ENCODE measurements at regions of chr5 and their contacts with region 1.

Region 1: DNA sequence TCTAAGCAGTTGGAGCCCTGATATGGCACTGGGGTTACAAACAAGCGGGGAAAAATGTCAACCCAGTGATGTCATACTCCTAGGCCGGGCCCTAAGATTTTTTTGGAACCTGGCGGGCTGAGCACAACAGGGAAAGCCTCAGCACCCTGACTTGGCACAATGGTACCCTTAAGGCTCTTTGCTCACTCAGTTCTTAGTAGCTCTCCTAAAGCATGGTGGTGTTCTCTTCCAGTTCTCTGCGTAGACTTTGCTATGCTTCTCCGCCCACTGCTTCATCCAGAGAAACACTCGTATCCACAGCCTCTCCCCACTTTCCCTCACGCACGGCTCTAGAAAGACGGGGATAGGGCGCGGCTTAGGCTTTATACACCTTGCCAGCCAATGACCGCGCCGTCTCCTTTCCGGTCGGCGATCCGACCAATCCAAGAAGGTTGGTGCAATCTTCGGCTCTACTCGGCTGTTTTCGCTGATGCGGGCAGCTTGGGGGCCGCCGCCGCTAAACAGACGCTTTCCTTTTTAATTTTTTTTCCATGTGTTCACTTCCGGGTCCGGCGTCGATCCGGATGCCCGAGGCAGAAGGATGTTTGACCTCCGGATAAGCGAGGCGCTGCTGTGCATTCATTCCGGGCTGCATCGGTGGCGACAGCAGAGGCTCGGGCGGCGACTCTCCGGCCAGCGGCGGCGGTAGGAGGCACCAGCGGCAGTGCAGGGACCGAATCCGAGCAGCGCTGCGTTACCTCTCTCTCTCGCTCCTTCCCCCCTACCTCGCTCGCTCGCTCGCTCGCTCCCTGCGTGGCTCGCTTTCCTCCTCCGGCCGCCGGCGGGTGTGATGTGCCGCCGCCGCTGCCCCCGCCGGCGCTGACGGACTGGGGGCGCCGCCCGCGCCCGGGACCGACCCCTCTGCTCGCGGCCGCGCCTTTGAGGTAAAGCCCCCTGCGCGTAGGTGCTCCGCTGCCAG is at the start of gene CSNK1G3:
- DNase-seq: peak; percentile 100
- H3K27ac ChIP-seq: peak within 1 kb of the TSS; percentile 94
- CTCF ChIP-seq: no peak

Region 2: DNA sequence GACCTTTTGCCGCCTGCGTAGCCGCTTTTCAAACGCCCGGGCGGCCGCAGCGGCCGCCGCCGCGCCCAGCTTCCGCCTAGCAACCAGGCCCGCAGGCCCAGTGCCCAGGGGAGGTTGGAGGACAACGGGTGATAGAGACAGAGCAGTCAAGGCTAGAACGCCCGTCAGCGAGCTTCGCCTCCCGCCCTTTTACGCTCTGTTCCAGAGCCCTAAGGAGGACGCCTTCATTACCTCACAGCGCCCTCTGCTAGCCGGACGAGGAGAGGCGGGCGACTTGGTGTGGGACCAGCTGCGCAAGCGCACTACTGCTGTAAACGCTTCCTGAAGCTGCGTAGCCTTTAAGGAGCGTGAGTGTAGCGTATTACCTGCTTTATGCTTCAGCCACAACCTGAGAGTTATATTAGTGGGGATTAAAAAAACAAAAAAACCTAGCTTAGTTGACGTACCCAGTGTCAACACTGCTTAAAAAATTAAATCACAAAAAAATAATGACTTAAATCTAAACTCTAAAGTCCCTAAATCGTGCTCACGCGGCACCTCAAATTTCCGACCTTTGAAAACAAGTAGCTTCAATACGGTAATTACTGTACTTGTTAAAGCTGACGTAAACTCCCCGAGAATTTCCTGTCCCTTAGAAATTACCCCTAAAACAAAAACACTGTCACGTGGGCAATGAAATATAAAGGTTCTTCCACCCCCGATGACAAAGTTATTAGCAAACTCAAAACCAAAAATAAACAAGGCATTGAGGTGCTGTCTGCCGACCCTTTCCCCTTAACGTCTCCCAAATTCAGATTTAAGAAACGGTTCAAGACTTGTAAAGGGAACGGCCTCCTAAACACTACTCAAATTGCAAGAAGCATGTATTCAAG is 88.4 kb before region 1 on chr5 and contains the start of gene CEP120:
- CTCF ChIA-PET with region 1: interaction called, 8 read pairs
- POLR2A ChIA-PET with region 1: interaction called, 21 read pairs
- DNase-seq: peak; percentile 99
- H3K27ac ChIP-seq: peak within 1 kb of the TSS; percentile 96
- CTCF ChIP-seq: peak; percentile 95

Region 3: DNA sequence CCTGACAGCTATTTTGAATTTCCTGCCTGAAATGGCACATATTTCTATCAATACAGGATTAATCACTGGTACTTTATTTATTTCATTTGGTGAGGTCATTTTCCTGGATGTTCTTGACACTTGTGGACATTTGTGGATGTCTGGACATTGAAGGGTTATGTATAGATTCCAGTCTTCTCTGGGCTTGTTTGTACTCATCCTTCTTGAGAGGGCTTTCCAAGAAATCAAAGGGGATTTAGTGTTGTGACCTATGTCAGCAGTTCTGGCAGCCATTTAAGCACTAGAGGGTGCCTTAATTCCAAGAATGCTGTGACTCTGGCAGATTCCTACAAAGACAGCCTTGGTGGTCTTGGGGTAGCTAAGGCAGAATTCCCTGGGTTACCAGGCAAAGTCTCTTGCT is 259.8 kb after region 1 on chr5:
- CTCF ChIA-PET with region 1: no interaction called
- POLR2A ChIA-PET with region 1: no interaction called
- DNase-seq: no peak
- H3K27ac ChIP-seq: no peak overlapping the region
- CTCF ChIP-seq: no peak